MCF 10A (cell line): ENCODE measurements at regions of chr3 and their contacts with region 1.

Region 1: DNA sequence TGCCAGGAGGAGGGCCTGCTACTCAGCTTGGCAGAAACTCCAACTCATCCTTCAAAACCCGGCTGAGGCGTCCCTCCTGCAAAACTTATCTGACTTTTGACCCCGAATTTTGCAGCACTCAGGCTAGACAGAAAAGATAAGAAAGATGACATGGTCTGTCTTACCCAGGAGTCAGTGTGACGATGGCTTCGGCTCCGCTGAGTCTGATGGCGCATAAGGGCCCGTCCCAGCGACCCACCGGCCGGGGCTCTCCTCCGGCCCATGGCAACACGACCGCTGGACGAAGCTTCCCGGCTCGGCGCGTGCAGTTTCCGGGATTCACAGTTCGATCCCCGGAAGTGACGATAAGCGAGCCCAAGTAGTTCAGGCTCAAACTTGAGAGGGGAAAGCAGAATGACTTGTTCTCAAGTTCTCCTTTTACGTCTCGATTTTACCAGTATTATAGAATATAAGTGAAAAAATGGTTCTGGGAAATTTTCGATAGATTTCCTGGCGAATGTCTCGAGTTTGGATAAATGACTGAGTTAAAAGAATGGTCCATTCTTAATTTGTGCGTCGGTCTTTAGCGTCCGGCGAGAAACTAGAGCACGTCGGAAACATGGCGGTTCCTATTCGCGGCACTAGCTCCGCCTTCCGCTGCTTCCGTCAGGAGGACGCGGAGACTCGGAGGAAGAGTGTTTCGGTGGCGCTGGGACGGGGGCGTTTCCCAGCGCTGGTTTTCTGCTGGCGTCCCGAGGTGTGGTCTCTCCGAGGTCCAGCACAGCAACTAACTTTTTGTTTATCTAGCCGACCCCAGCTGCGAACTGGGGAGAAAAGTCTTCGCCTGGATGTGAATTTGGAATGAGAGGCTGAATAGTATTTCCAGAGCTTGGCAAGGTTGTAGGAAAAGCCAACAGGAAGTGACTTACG is at the start of gene LSG1:
- DNase-seq: peak; percentile 94
- H3K4me3 Mint-ChIP-seq: peak within 1 kb of the TSS; percentile 99
- H3K27ac Mint-ChIP-seq: peak within 1 kb of the TSS; percentile 97
- H3K4me1 Mint-ChIP-seq: peaks cover 22% of the 10 kb centered on the region
- H3K27me3 Mint-ChIP-seq: no peaks in the 10 kb centered on the region
- CTCF ChIP-seq: no peak
- total RNA-seq, gene LSG1: 30.5 and 35.1 TPM in 2 replicates

Region 2: GRCh38 chr3:194654443-194654842 is 17.7 kb before region 1 on chr3:
- CTCF ChIA-PET with region 1: interaction called, 19 read pairs
- POLR2A ChIA-PET with region 1: interaction called, 16 read pairs
- intact Hi-C with region 1: no loop called
- DNase-seq: no peak
- H3K4me3 Mint-ChIP-seq: no peak overlapping the region
- H3K27ac Mint-ChIP-seq: no peak overlapping the region
- H3K4me1 Mint-ChIP-seq: no peaks in the 10 kb centered on the region
- H3K27me3 Mint-ChIP-seq: no peaks in the 10 kb centered on the region
- CTCF ChIP-seq: no peak

Region 3: DNA sequence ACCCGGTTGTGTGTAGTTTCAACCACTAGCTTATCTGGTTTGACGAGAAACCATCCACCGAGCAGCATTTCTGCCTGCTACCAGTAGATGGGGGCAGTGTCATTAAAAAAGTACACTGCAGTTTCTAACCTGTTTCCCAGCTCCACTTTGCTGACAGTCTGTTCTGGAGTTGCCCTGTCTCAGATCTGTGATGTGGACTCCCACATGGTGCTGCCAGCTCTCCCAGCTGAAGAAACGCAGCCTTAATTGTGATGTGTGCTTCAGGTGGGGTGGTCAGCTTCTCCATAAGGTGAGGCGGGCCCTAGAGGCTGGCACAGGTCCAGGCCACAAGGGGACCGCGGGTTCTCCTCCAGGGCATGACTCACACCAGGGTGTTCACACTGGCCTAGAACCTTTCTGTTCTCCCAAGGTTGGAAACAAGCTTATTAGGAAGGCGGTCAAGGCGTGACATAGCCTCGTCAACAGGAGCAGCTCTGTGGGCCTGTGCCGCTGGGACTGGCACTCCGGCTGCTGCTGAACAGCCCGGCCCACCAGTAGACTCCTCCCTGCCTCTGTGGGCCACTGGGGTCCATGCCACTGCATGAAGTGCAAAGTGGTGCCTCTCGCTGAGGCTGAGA is 10.6 kb after region 1 on chr3:
- CTCF ChIA-PET with region 1: interaction called, 47 read pairs
- POLR2A ChIA-PET with region 1: interaction called, 64 read pairs
- intact Hi-C with region 1: no loop called
- DNase-seq: peak; percentile 86
- H3K4me3 Mint-ChIP-seq: no peak overlapping the region
- H3K27ac Mint-ChIP-seq: no peak overlapping the region
- H3K4me1 Mint-ChIP-seq: peaks cover 17% of the 10 kb centered on the region
- H3K27me3 Mint-ChIP-seq: no peaks in the 10 kb centered on the region
- CTCF ChIP-seq: peak; percentile 84

Region 4: GRCh38 chr3:194894538-194894937 is 222.4 kb after region 1 on chr3:
- CTCF ChIA-PET with region 1: no interaction called
- POLR2A ChIA-PET with region 1: no interaction called
- intact Hi-C with region 1: no loop called
- DNase-seq: no peak
- H3K4me3 Mint-ChIP-seq: no peak overlapping the region
- H3K27ac Mint-ChIP-seq: no peak overlapping the region
- H3K4me1 Mint-ChIP-seq: no peaks in the 10 kb centered on the region
- H3K27me3 Mint-ChIP-seq: peaks cover 42% of the 10 kb centered on the region
- CTCF ChIP-seq: no peak

Region 5: GRCh38 chr3:195020921-195021320 is 348.8 kb after region 1 on chr3:
- CTCF ChIA-PET with region 1: no interaction called
- POLR2A ChIA-PET with region 1: no interaction called
- intact Hi-C with region 1: no loop called
- DNase-seq: no peak
- H3K4me3 Mint-ChIP-seq: no peak overlapping the region
- H3K27ac Mint-ChIP-seq: no peak overlapping the region
- H3K4me1 Mint-ChIP-seq: peaks cover 7% of the 10 kb centered on the region
- H3K27me3 Mint-ChIP-seq: peaks cover 55% of the 10 kb centered on the region
- CTCF ChIP-seq: no peak

Region 6: DNA sequence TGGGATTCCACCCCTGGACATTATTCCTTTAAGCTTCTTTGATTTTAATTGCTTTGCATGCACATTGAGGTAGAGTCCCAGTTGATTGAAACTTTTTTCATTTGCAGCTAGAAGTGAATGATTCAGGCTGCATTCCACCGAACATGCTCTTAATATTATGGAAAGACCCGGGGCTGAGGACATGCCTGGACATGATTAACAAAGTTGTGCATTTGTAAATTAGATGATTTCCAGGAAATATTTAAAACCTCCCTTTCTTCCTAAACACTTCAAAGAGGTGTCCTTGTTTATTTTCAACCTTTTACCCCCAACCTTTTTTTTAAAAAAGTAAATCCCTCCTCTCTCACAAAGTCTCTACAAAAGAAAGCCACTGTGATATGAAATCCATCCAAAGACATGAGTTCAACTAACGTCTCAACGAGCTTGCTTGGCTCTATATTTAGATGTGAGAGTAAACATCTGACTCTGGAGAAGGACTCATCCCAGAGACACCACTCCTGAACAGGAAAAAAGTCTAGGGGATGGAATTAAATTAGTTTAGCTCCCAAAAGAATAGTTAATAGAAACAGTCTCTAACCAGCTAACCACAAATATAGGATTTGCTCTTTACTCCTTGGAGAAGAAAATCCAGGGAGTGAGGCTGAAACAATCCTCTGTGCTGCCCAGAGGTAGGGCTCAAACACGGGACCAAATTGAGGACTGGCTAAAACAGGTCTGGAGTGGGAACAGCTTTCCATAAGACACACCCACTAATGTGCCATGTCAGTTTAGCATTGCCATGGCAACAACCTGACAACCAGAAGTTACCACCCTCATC is 515.7 kb after region 1 on chr3:
- CTCF ChIA-PET with region 1: interaction called, 3 read pairs
- POLR2A ChIA-PET with region 1: interaction called, 13 read pairs
- intact Hi-C with region 1: no loop called
- DNase-seq: peak; percentile 60
- H3K4me3 Mint-ChIP-seq: peak overlapping the region; percentile 35
- H3K27ac Mint-ChIP-seq: peak overlapping the region; percentile 98
- H3K4me1 Mint-ChIP-seq: peaks cover 34% of the 10 kb centered on the region
- H3K27me3 Mint-ChIP-seq: no peaks in the 10 kb centered on the region
- CTCF ChIP-seq: no peak

Region 7: DNA sequence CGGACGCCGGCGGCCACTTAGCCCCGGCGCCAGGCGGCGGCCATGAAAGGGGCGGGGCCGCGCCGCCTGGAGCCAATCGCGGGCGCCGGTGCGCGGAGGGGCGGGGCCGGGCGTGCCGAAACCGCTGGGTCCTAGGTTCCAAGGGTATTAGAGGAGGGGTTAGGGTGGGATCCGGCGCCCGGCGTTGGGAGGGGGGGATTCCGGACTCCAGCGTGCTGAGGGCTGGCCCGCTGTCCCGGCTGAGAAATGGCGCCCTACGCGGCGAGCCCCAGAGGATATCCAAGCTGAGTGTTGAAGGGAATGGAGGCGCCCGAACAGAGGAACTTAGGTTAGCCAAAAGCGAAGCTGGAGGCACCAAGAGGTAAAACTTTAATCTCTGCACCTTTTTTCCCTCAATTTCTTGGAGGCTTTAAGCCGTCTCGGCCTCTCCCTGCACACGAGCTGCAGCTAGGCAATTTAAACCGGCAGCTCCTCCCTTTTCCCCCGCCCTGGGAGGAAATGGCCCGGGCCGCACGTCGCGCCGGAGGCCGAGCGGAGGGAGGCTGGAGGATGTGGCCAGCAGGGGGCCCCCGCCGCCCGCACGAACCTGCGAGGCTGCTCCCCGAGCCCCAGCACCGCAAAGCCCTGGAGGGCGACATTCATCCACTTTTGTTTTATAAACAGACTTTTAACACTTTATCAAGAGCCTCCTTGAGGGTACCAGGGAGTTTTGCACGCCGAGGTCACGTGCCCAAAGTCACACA is 599.1 kb after region 1 on chr3 and contains the start of gene XXYLT1:
- CTCF ChIA-PET with region 1: interaction called, 66 read pairs
- POLR2A ChIA-PET with region 1: interaction called, 37 read pairs
- intact Hi-C with region 1: no loop called
- DNase-seq: peak; percentile 85
- H3K4me3 Mint-ChIP-seq: peak within 1 kb of the TSS; percentile 81
- H3K27ac Mint-ChIP-seq: peak within 1 kb of the TSS; percentile 69
- H3K4me1 Mint-ChIP-seq: peaks cover 27% of the 10 kb centered on the region
- H3K27me3 Mint-ChIP-seq: no peaks in the 10 kb centered on the region
- CTCF ChIP-seq: peak; percentile 90
- total RNA-seq, gene XXYLT1: 10.0 and 10.9 TPM in 2 replicates

Region 8: DNA sequence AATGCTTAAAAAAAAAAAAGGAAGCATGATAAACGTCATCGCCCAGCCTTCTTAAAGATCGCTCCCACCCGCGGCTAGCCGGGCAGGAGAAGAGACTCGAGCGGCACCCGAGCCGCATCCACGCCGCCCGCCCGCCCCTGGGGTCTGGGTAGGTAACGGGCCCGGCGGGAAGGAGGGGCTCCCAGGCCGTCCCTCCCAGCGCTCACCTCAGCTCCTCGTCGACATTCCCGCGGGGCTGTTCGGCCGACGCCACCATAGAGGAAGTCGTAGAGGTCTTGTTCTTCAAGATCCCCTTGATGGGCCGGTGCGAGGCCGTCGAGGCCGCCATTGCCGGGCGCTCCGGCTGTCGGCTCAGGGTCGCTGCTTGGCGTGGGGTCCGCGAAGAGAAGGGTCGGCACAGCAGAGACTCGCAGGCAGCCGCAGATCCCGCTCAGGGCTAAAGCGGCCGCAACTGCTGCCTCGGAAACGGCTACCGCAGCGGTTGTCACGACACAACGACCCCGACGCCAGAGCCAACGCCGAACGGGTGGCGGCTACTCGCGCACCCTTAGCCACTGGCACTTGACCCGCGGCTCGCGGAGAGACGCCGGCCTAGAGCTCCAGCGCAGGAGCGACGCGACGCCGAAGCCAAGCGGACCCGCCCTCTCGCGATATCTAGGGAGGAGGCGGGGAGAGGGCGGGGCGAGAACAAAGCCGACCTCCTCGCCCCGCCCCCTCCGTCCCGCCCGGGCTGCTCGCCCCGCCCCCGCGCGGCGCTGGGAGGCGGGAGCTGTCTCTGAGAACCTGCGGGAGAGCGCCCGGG is 870.7 kb after region 1 on chr3 and contains the start of gene PPP1R2:
- CTCF ChIA-PET with region 1: interaction called, 3 read pairs
- POLR2A ChIA-PET with region 1: interaction called, 18 read pairs
- intact Hi-C with region 1: no loop called
- DNase-seq: peak; percentile 94
- H3K4me3 Mint-ChIP-seq: peak within 1 kb of the TSS; percentile 76
- H3K27ac Mint-ChIP-seq: peak within 1 kb of the TSS; percentile 92
- H3K4me1 Mint-ChIP-seq: peaks cover 31% of the 10 kb centered on the region
- H3K27me3 Mint-ChIP-seq: no peaks in the 10 kb centered on the region
- CTCF ChIP-seq: no peak
- total RNA-seq, gene PPP1R2: 53.0 and 68.6 TPM in 2 replicates